ENCODE measurements at regions of chr1 and their contacts with region 1.

Region 1: DNA sequence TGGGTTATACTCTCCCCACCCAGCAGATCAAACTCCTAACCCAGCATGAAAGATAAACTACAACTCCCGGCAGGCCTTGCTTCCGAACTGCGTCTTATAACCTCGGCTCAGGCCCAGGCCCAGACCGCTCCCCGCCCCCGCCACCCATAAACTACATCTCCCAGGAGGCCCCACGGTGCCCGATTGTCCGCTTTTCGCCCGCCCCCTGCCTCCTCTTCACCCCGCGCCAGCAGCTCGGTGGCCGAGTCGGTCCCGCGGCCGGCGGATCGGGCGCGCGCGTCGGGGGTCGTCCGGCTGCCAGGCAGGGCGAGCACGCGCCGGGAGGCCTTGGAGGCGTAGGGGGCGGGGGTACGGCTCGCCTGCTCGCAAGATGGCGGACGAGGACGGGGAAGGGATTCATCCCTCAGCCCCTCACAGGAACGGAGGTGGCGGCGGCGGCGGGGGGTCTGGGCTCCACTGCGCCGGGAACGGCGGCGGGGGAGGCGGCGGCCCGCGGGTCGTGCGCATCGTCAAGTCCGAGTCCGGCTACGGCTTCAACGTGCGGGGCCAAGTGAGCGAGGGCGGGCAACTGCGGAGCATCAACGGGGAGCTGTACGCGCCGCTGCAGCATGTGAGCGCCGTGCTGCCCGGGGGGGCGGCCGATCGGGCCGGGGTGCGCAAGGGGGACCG is at the start of gene SNX27:
- DNase-seq: peak; percentile 94 to 96
- ATAC-seq: peak; percentile 94
- H3K4me3 ChIP-seq: peak within 1 kb of the TSS; percentile 61 to 84
- H3K27ac ChIP-seq: peak within 1 kb of the TSS; percentile 31 to 65
- H3K4me1 ChIP-seq: peaks cover 0 to 3% of the 10 kb centered on the region in 2 donors
- H3K27me3 ChIP-seq: no peaks in the 10 kb centered on the region
- total RNA-seq, gene SNX27: 34.7 to 48.0 TPM

Region 2: DNA sequence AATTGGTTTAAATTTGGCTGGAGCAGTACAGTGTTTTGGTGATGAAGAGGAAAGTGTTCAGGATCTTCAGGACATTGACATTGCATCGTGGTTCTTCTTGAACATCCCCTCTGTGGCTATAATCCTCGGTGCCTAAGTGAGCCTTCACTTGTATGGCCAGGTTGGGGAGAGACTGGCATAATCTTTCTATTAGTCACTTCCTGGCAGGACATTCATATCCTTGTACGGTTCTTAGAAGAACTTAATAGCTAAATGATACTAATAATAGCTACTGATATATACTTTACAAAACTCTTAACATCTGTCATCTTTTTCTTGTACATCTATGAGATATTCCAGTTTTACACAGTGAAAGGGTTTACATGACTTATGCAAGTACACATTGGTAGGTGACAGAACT is 68.8 kb after region 1 on chr1:
- intact Hi-C with region 1: loop called in 1 of 2 experiments (anchors 10 kb)
- DNase-seq: no peak
- ATAC-seq: peak; percentile 56
- H3K4me3 ChIP-seq: no peak overlapping the region
- H3K27ac ChIP-seq: peak overlapping the region; percentile 67 to 82
- H3K4me1 ChIP-seq: no peaks in the 10 kb centered on the region
- H3K27me3 ChIP-seq: no peaks in the 10 kb centered on the region

Region 3: DNA sequence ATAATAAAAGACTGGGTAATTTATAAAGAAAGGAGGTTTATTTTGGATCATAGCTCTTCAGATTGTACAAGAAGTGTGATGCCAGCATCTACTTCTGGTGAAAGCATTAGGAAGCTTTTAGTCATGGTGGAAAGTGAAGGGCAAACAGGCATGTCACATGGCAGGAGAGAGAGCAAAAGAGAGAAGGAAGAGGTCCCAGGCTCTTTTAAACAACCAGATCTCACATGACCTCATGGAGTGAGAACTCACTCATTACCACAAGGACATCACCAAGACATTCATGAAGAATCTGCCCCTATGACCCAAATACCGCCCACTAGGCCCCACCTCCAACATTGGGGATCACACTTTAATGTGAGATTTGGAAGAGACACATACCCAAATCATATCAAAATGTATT is 537.0 kb after region 1 on chr1:
- intact Hi-C with region 1: no loop called
- DNase-seq: no peak
- ATAC-seq: no peak
- H3K4me3 ChIP-seq: no peak overlapping the region
- H3K27ac ChIP-seq: no peak overlapping the region
- H3K4me1 ChIP-seq: no peaks in the 10 kb centered on the region
- H3K27me3 ChIP-seq: no peaks in the 10 kb centered on the region

Measured in aorta (tissue), 5 donors.